Adrenal gland (tissue), 19 donors: ENCODE measurements at regions of chr9 and their contacts with region 1.

Region 1: GRCh38 chr9:100756221-100756620 is 178.3 kb downstream of the CAVIN4 start:
- DNase-seq: peak in 1 of 7 donors; percentile 66
- H3K4me3 ChIP-seq: no peak overlapping the region
- H3K27ac ChIP-seq: no peak overlapping the region
- H3K4me1 ChIP-seq: no peaks in the 10 kb centered on the region
- H3K27me3 ChIP-seq: no peaks in the 10 kb centered on the region
- CTCF ChIP-seq: no peak
- POLR2A ChIP-seq: no peak

Region 2: GRCh38 chr9:100819980-100820379 is 63.8 kb after region 1 on chr9:
- intact Hi-C with region 1: loop called in 1 of 2 experiments (anchors 10 kb)
- DNase-seq: no peak
- H3K4me3 ChIP-seq: no peak overlapping the region
- H3K27ac ChIP-seq: no peak overlapping the region
- H3K4me1 ChIP-seq: no peaks in the 10 kb centered on the region
- H3K27me3 ChIP-seq: no peaks in the 10 kb centered on the region
- CTCF ChIP-seq: no peak
- POLR2A ChIP-seq: no peak